ENCODE measurements at regions of chr1 and their contacts with region 1.

Region 1: DNA sequence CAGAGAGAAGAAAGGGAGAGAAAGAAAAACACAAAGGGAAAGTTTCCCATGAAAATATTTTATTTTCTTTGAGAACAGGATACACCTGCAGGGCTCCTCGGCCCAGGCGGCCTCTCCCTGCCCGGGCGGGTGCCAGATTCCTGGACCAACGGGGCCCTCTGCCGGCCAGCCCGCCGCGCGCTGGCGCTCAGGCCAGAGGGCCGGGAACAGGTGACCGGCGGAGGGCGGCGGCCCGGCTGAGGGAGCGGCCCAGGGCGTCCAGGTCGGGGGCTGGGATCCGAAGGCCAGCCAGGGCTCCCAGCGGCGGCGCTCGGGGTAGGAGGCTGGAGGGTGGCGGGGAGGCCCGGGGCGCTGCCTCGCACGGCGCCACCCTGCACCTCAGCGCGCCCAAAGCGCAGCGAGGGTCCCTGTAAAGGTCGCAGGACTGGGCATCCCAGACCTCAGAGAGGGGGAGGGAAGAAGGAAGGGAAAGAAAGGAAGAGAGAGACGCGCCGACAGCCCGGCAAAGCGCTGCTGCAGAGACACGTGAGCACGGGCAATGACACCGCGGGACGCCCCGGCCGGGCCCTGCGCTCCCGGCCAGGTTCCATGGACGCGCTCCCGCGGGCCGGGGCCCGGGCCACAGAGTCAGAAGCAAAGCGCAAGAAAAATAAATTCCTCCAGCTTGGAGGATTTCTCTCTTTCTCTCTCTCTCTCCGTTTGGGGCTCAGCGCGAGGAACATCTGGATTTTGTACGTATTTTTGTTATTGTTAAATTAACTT is 927 bp downstream of the WNT9A start:
- DNase-seq: peak; percentile 74 to 77
- ATAC-seq: peak; percentile 72 to 87 (median 80)
- H3K4me3 ChIP-seq: peak overlapping the region; percentile 16 to 74 (median 60)
- H3K27ac ChIP-seq: peak overlapping the region in 8 of 10 donors; percentile 5 to 92 (median 90)
- H3K4me1 ChIP-seq: peaks cover 8 to 67% (median 38%) of the 10 kb centered on the region in 9 donors
- H3K27me3 ChIP-seq: peaks cover 0 to 44% (median 0%) of the 10 kb centered on the region in 7 donors
- CTCF ChIP-seq: peak; percentile 58 to 92 (median 80)

Region 2: GRCh38 chr1:227482023-227482299 is 464.8 kb before region 1 on chr1:
- intact Hi-C with region 1: loop called (anchors 1 to 5 kb)
- DNase-seq: no peak
- ATAC-seq: no peak
- H3K4me3 ChIP-seq: no peak overlapping the region
- H3K27ac ChIP-seq: no peak overlapping the region
- H3K4me1 ChIP-seq: no peaks in the 10 kb centered on the region
- H3K27me3 ChIP-seq: peaks cover 0 to 17% (median 0%) of the 10 kb centered on the region in 7 donors
- CTCF ChIP-seq: no peak

Region 3: GRCh38 chr1:227542143-227543120 is 404.4 kb before region 1 on chr1:
- intact Hi-C with region 1: loop called in 2 of 10 experiments (anchors 10 kb)
- DNase-seq: peak; percentile 84 to 91
- ATAC-seq: peak; percentile 95 to 97 (median 97)
- H3K4me3 ChIP-seq: peak overlapping the region; percentile 45 to 88 (median 76)
- H3K27ac ChIP-seq: peak overlapping the region; percentile 2 to 78 (median 68)
- H3K4me1 ChIP-seq: peaks cover 0 to 17% (median 12%) of the 10 kb centered on the region in 9 donors
- H3K27me3 ChIP-seq: peaks cover 0 to 7% (median 0%) of the 10 kb centered on the region in 7 donors
- CTCF ChIP-seq: peak; percentile 95 to 99 (median 99)

Region 4: DNA sequence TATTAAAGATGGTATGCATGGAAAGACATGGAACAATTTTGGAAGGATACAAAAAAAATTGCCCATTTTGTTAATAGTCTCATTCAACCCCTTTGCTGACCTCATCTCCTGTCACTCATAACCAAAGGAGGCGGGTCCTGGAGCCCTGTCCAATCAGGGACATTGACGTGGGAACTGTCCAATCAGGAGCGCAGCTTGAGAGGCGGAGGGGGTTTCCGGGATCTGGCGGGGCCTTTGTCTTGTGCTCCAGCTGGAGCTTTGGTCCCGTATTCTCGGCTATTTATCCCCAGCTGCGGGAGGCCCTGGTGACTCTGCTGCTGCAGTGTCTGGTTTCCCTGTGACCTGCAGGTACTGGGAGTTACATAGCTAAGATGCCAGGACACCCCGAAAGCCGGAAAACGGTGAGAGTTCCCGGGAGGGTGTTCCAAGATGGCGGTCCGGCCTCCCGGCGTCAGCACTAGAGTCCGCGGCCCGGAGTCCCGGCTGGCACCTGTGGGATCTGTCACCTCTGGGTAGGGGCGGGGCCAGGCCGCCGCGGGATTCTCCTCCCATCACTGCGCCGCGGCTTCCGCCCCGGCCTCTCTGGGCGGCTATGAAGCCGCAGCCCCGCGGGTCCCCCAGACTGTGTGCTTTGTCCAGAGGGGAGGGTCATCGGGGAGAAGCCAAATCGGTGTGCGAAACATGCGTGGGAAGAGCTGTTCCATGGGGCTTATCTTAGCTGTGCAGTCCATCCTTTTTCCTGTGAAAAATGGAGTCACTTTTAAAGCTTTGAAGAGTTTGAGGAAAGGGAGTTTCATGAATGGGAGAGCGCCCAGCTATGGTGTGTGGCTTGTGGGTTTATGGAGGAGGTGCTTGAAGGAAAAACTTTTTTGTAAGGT is 383.2 kb before region 1 on chr1 and contains the start of gene ZNF678:
- intact Hi-C with region 1: loop called in 1 of 10 experiments (anchors 5 kb)
- DNase-seq: peak; percentile 87 to 95
- ATAC-seq: peak; percentile 95 to 99 (median 97)
- H3K4me3 ChIP-seq: peak within 1 kb of the TSS; percentile 64 to 84 (median 76)
- H3K27ac ChIP-seq: peak within 1 kb of the TSS; percentile 64 to 90 (median 88)
- H3K4me1 ChIP-seq: peaks cover 0 to 20% (median 8%) of the 10 kb centered on the region in 9 donors
- H3K27me3 ChIP-seq: peaks cover 0 to 34% (median 33%) of the 10 kb centered on the region in 7 donors
- CTCF ChIP-seq: no peak
- total RNA-seq, gene ZNF678: 2.5 to 4.7 (median 3.5) TPM

Region 5: GRCh38 chr1:227762233-227762911 is 184.4 kb before region 1 on chr1:
- intact Hi-C with region 1: loop called (anchors 1 to 5 kb)
- DNase-seq: peak; percentile 90
- ATAC-seq: peak; percentile 81 to 89 (median 84)
- H3K4me3 ChIP-seq: peak overlapping the region in 4 of 10 donors; percentile 6 to 34 (median 24)
- H3K27ac ChIP-seq: peak overlapping the region in 8 of 10 donors; percentile 5 to 91 (median 63)
- H3K4me1 ChIP-seq: peaks cover 11 to 69% (median 54%) of the 10 kb centered on the region in 9 donors
- H3K27me3 ChIP-seq: no peaks in the 10 kb centered on the region
- CTCF ChIP-seq: peak; percentile 80 to 97 (median 92)

Region 6: DNA sequence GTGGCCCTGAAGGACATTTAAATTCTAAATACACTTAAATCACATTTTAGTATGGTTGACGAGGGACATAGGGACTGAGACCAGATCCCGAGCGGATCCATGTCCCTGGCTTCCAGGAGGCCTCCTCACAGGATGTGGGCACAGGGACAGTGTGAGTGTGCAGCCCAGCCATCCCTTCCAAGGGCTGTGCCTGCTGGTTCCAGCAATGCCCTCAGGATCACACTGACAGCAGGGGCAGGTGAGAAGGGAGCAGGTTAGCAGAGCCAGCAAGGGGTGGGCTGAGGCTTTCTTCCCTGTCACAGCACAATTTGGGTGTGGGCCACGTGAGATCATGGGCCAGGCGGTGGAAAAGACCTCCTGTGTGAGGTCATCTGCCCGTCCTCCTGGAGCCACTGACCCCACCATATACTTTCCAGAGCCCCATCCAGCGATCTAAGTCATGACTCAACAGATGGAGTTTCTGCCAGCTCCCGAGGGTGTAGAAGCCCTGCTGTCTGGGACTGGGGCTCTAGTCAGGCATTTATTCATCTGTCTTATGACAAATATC is 168.3 kb before region 1 on chr1:
- intact Hi-C with region 1: loop called in 1 of 10 experiments (anchors 5 kb)
- DNase-seq: no peak
- ATAC-seq: peak in 1 of 8 donors; percentile 33
- H3K4me3 ChIP-seq: no peak overlapping the region
- H3K27ac ChIP-seq: no peak overlapping the region
- H3K4me1 ChIP-seq: peaks cover 0 to 15% (median 8%) of the 10 kb centered on the region in 9 donors
- H3K27me3 ChIP-seq: no peaks in the 10 kb centered on the region
- CTCF ChIP-seq: no peak

Region 7: DNA sequence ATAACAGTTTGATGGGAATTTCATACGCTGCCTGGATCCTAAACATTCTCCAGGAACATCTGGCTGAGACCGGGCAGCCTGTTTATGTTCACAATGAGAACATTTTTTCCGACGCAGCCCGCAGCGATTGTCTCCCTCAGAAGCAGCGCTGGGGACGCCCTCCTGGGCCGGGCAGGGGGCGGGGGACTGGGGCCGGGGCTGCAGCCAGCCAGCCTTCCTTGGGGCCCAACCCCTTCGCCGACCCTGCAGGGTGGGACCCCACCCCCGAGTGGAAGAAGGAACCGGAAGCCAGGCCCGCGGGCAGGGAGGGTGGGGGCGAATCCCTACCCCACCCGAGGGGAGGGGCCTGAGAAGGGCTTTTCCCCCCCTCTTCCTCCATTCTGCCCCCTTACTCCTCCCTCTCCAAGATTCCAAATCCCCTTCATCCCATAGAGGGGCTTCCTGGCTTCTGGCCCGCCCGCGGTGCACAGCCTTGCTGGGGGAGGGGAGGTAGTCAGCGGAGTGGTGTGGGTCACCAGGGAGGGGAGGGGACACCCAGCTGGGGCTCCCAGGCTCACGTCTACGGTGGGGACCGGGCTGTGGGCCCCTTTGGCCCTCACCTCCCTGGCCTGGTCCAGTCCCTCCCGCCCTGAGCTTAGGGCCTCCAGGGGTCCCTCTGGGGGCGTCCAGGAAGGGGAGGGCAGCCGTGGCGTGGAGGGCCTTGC is 59.7 kb before region 1 on chr1:
- intact Hi-C with region 1: loop called in 2 of 10 experiments (anchors 5 to 10 kb)
- DNase-seq: peak; percentile 73 to 81
- ATAC-seq: peak; percentile 60 to 86 (median 78)
- H3K4me3 ChIP-seq: peak overlapping the region; percentile 40 to 61 (median 53)
- H3K27ac ChIP-seq: peak overlapping the region; percentile 73 to 95 (median 86)
- H3K4me1 ChIP-seq: peaks cover 15 to 31% (median 24%) of the 10 kb centered on the region in 9 donors
- H3K27me3 ChIP-seq: peaks cover 0 to 13% (median 0%) of the 10 kb centered on the region in 7 donors
- CTCF ChIP-seq: no peak

Region 8: GRCh38 chr1:228109073-228109961 is 162.5 kb after region 1 on chr1 and contains the start of gene MRPL55:
- intact Hi-C with region 1: no loop called
- DNase-seq: peak; percentile 96 to 98
- ATAC-seq: peak; percentile 93 to 99 (median 97)
- H3K4me3 ChIP-seq: peak within 1 kb of the TSS; percentile 82 to 99 (median 94)
- H3K27ac ChIP-seq: peak within 1 kb of the TSS; percentile 56 to 96 (median 87)
- H3K4me1 ChIP-seq: peaks cover 7 to 36% (median 25%) of the 10 kb centered on the region in 9 donors
- H3K27me3 ChIP-seq: no peaks in the 10 kb centered on the region
- CTCF ChIP-seq: peak in 4 of 9 donors; percentile 5 to 38 (median 20)
- total RNA-seq, gene MRPL55: 38.0 to 65.2 (median 46.3) TPM